PC-3 (cell line): ENCODE measurements at regions of chr16 and their contacts with region 1.

Region 1: GRCh38 chr16:86575754-86576557 is 2.4 kb upstream of the FOXL1 start:
- DNase-seq: peak; percentile 94
- ATAC-seq: peak; percentile 81
- H3K4me3 ChIP-seq: peak overlapping the region; percentile 74
- H3K27ac ChIP-seq: peak overlapping the region; percentile 86
- H3K4me1 ChIP-seq: peaks cover 18% of the 10 kb centered on the region
- H3K27me3 ChIP-seq: no peaks in the 10 kb centered on the region
- CTCF ChIP-seq: peak; percentile 77

Region 2: GRCh38 chr16:84881702-84882521 is 1694.0 kb before region 1 on chr16:
- CTCF ChIA-PET with region 1: no interaction called
- POLR2A ChIA-PET with region 1: no interaction called
- intact Hi-C with region 1: no loop called
- DNase-seq: no peak
- ATAC-seq: no peak
- H3K4me3 ChIP-seq: no peak overlapping the region
- H3K27ac ChIP-seq: no peak overlapping the region
- H3K4me1 ChIP-seq: peaks cover 9% of the 10 kb centered on the region
- H3K27me3 ChIP-seq: no peaks in the 10 kb centered on the region
- CTCF ChIP-seq: no peak

Region 3: DNA sequence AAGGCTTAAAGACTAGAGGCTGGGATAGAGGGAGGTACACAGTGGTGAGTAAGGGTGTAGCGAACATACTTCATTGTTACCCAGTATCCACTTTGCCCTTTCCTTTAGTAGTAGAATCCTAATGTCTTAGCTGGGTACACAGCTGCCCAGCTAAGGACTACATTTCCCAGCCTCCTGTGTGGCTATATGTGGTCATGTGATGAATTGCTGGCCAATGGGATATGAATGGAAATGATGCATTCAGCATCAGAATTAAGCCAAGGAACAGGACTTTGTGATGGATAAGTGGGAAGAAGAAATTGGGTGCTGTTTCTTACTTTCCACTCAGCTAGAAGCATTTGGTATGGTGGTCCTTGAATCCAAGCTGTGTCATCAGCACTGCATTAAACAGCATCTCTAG is 58.3 kb after region 1 on chr16:
- CTCF ChIA-PET with region 1: interaction called, 3 read pairs
- POLR2A ChIA-PET with region 1: interaction called, 20 read pairs
- intact Hi-C with region 1: loop called (anchors 1 kb)
- DNase-seq: peak; percentile 16
- ATAC-seq: no peak
- H3K4me3 ChIP-seq: no peak overlapping the region
- H3K27ac ChIP-seq: no peak overlapping the region
- H3K4me1 ChIP-seq: peaks cover 31% of the 10 kb centered on the region
- H3K27me3 ChIP-seq: no peaks in the 10 kb centered on the region
- CTCF ChIP-seq: no peak

Region 4: GRCh38 chr16:86664533-86665318 is 88.8 kb after region 1 on chr16:
- CTCF ChIA-PET with region 1: interaction called, 13 read pairs
- POLR2A ChIA-PET with region 1: interaction called, 19 read pairs
- intact Hi-C with region 1: loop called (anchors 1 kb)
- DNase-seq: peak; percentile 91
- ATAC-seq: peak; percentile 77
- H3K4me3 ChIP-seq: peak overlapping the region; percentile 34
- H3K27ac ChIP-seq: peak overlapping the region; percentile 99
- H3K4me1 ChIP-seq: peaks cover 32% of the 10 kb centered on the region
- H3K27me3 ChIP-seq: no peaks in the 10 kb centered on the region
- CTCF ChIP-seq: no peak

Region 5: DNA sequence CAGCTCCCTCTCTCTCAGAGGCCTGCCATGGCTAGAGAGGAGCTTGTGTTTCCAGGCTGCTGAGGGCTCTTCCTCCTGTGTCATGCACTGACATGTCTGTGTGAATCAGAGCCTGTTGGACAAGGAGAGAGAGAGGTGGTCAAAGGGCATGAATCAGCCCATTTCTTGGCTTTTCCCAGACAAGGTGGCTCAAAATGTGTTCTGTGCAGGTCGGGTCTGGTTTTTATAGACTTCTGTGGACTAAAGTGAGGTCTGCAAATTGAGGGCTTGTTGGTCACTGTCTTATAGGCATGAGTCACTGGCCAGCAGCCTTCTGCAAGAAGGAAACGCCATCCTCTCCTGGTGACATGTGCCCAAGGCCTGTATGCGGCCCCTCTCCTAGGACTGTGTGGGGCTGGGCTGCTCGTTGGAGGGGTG is 100.3 kb after region 1 on chr16:
- CTCF ChIA-PET with region 1: no interaction called
- POLR2A ChIA-PET with region 1: interaction called, 23 read pairs
- intact Hi-C with region 1: no loop called
- DNase-seq: peak; percentile 57
- ATAC-seq: peak; percentile 73
- H3K4me3 ChIP-seq: no peak overlapping the region
- H3K27ac ChIP-seq: peak overlapping the region; percentile 73
- H3K4me1 ChIP-seq: peaks cover 25% of the 10 kb centered on the region
- H3K27me3 ChIP-seq: no peaks in the 10 kb centered on the region
- CTCF ChIP-seq: no peak

Region 6: DNA sequence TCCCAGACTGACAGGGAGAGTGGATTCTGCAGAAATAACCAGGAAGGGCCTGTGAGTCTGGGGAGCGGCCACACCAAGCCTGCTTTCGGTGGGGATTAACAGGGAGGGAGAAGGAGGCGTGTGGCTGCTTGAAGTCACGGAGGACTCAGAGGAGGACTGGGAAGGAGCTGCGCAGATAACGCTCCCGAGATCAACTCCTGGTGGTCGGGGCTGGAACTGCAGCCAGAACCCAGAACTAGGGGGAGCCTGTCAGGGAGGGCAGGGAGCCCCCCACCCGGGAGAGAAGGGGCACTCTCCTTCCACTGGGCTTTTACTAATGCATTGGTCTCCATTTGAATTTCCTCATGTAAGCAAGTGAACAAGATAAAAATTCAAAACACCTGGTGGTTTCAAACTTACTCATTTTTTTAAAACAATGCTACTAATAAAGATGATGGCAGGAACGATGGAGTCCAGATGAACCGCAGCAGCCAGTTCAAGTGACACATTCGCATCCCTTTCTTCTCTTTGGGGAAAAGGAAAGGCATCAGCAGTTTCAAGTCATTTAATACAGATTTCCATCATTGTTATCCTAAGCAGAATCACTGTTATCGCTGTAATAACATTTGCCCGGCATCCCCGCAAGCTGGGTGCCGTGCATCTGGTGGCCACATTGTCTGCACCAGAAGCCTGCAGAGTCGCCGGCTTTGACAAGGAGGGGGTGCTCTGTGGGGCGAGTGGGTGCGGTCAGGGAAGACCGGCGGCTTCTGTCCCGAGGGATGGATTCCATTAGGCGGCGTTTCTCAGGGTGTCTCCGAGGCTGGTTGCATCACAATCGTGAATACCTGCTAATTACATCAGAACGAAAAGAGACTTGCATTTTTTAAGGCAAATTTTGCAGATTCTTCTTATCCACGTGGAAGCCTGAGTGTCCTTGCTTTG is 185.4 kb after region 1 on chr16:
- CTCF ChIA-PET with region 1: no interaction called
- POLR2A ChIA-PET with region 1: no interaction called
- intact Hi-C with region 1: loop called (anchors 1 kb)
- DNase-seq: peak; percentile 60
- ATAC-seq: peak; percentile 67
- H3K4me3 ChIP-seq: no peak overlapping the region
- H3K27ac ChIP-seq: no peak overlapping the region
- H3K4me1 ChIP-seq: no peaks in the 10 kb centered on the region; the same call in 1 of the 2 replicates
- H3K27me3 ChIP-seq: no peaks in the 10 kb centered on the region
- CTCF ChIP-seq: peak; percentile 73

Region 7: GRCh38 chr16:86823895-86824671 is 248.1 kb after region 1 on chr16:
- CTCF ChIA-PET with region 1: no interaction called
- POLR2A ChIA-PET with region 1: no interaction called
- intact Hi-C with region 1: loop called (anchors 5 kb)
- DNase-seq: peak; percentile 80
- ATAC-seq: peak; percentile 69
- H3K4me3 ChIP-seq: peak overlapping the region; percentile 11; the same call in 1 of the 2 replicates
- H3K27ac ChIP-seq: peak overlapping the region; percentile 98
- H3K4me1 ChIP-seq: peaks cover 63% of the 10 kb centered on the region
- H3K27me3 ChIP-seq: no peaks in the 10 kb centered on the region
- CTCF ChIP-seq: no peak

Region 8: DNA sequence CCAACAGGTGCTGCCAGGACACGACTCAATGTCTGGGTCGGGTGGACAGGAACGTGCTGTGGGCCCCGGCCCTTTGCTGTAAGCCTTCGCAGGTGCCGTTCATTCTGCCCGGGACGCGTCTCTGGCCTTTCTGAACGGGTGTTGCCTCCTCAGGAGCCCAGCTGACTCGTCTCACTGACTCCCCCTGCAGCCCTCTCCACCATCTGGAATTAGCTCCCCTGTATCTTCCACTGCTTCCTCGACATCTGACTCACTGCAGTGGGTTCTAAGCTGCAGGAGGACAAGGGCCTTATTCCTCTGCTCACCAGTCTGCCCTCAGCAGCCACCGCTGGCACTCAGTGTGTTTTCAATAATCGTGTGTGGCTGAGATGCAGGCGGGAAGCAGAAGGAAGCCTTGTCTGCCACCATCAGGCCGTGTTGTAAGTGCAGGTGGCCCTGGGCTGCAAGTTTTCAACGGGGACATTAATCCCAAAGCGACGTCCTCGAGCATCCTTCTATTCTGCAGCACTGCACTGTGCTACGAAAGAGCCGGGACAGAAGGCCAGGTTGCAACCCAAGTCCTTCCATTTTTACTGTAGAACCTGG is 258.6 kb after region 1 on chr16:
- CTCF ChIA-PET with region 1: no interaction called
- POLR2A ChIA-PET with region 1: no interaction called
- intact Hi-C with region 1: no loop called
- DNase-seq: peak; percentile 7
- ATAC-seq: peak; percentile 54
- H3K4me3 ChIP-seq: no peak overlapping the region
- H3K27ac ChIP-seq: no peak overlapping the region
- H3K4me1 ChIP-seq: 0 out of 2 replicates have a peak, but pooled peaks cover 4% of the 10 kb centered on the region
- H3K27me3 ChIP-seq: no peaks in the 10 kb centered on the region
- CTCF ChIP-seq: peak; percentile 37; the same call in 1 of the 2 replicates

Region 9: DNA sequence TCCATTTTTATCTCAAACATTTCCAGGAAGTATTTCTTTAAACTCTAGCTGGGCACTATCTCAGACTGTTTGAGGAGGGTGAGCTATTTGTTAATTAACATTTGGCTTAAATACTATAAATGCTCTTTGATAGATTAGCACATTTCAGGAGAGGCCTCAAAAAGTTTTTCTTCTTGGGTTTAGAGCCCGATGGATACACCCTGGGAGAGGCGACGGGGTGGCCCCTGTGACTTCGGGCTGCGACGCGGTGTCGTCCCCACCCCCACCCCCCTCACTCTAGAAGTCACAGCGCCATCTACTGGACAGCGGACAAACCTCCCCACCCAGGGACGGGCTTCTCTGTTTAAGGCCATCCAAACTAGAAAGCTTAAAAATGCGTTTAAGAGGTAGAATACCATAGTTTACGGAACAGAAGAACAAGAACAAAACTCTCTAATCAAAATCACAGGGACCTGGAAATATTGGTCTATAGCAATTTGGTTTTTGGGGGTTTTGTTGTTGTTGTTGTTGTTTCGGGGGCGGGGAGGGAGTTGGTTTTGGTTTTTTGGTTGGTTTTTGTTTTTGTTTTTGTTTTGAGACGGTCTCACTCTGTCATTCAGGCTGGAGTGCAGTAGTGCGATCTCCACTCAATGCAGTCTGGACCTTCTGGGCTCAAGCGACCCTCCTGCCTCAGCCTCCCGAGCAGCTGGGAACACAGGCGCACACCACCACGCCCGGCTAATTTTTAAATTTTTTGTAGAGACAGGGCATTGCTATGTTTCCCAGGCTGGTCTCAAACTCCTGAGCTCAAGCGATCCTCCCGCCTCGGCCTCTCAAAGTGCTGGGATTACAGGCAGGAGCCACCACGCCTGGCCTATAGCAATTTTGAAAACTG is 486.9 kb after region 1 on chr16:
- CTCF ChIA-PET with region 1: interaction called, 4 read pairs
- POLR2A ChIA-PET with region 1: no interaction called
- intact Hi-C with region 1: loop called (anchors 5 kb)
- DNase-seq: peak; percentile 73
- ATAC-seq: peak; percentile 92
- H3K4me3 ChIP-seq: peak overlapping the region; percentile 55
- H3K27ac ChIP-seq: no peak overlapping the region
- H3K4me1 ChIP-seq: peaks cover 7% of the 10 kb centered on the region; the same call in 1 of the 2 replicates
- H3K27me3 ChIP-seq: no peaks in the 10 kb centered on the region
- CTCF ChIP-seq: peak; percentile 86